Transverse colon (tissue), 4 donors: ENCODE measurements at regions of chr2 and their contacts with region 1.

Region 1: DNA sequence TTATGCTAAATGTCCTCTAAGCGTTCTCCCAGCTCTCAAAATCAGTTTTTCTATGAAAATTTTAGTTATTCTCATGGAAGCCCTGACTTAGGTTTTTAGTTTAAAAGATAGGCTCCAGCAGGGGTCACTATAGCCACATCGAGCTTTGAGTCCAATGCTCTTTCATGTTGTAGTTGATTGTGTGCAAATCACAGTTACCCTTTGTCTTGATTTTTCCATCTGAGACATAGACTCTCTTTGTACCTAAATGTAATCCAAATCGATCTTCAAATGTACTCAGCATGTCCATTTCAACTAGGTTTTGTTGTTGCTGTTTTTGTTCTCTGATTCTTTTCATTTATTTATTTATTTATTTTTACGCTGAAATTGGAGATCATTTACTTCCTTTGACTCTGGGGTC is 26.4 kb upstream of the MSTN start:
- DNase-seq: peak; percentile 56
- H3K4me3 ChIP-seq: no peak overlapping the region
- H3K27ac ChIP-seq: no peak overlapping the region
- H3K4me1 ChIP-seq: peaks cover 0 to 2% (median 0%) of the 10 kb centered on the region in 4 donors
- H3K27me3 ChIP-seq: no peaks in the 10 kb centered on the region
- CTCF ChIP-seq: peak; percentile 68 to 79 (median 70)
- EP300 ChIP-seq: no peak
- POLR2A ChIP-seq: no peak

Region 2: GRCh38 chr2:190277234-190278112 is 188.6 kb after region 1 on chr2:
- in situ Hi-C with region 1: loop called (anchors 10 to 25 kb)
- intact Hi-C with region 1: loop called (anchors 10 kb)
- DNase-seq: peak; percentile 10
- H3K4me3 ChIP-seq: no peak overlapping the region
- H3K27ac ChIP-seq: no peak overlapping the region
- H3K4me1 ChIP-seq: peaks cover 0 to 4% (median 0%) of the 10 kb centered on the region in 4 donors
- H3K27me3 ChIP-seq: no peaks in the 10 kb centered on the region
- CTCF ChIP-seq: peak; percentile 36 to 51 (median 46)
- EP300 ChIP-seq: no peak
- POLR2A ChIP-seq: no peak

Region 3: GRCh38 chr2:190352668-190353536 is 264.0 kb after region 1 on chr2:
- in situ Hi-C with region 1: loop called in 1 of 4 experiments (anchors 25 kb)
- intact Hi-C with region 1: no loop called
- DNase-seq: no peak
- H3K4me3 ChIP-seq: no peak overlapping the region
- H3K27ac ChIP-seq: peak overlapping the region; percentile 23 to 36 (median 30)
- H3K4me1 ChIP-seq: peaks cover 0 to 31% (median 17%) of the 10 kb centered on the region in 4 donors
- H3K27me3 ChIP-seq: no peaks in the 10 kb centered on the region
- CTCF ChIP-seq: no peak
- EP300 ChIP-seq: no peak
- POLR2A ChIP-seq: no peak

Region 4: DNA sequence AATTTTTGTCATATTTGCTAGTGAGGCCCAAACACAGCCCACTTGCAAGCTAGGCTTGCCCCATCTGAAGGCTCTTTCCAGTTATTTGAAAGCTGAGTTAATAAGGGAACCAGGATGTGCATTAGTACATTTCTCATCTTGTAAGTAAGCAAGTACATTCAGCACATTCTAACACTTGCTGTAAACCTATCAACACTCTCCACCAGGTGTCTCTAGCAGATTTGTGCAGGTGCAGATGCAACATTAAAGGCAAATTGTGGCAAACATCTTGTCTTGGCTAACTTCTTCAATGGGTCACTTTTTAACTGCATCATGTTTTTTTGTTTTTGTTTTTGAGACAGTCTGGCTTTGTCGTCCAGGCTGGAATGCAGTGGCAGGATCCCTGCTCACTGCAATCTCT is 293.9 kb after region 1 on chr2:
- in situ Hi-C with region 1: loop called in 1 of 4 experiments (anchors 10 kb)
- intact Hi-C with region 1: loop called (anchors 10 kb)
- DNase-seq: no peak
- H3K4me3 ChIP-seq: no peak overlapping the region
- H3K27ac ChIP-seq: no peak overlapping the region
- H3K4me1 ChIP-seq: no peaks in the 10 kb centered on the region
- H3K27me3 ChIP-seq: no peaks in the 10 kb centered on the region
- CTCF ChIP-seq: peak; percentile 50 to 84 (median 61)
- EP300 ChIP-seq: no peak
- POLR2A ChIP-seq: no peak